Vagina (tissue), 2 donors: ENCODE measurements at regions of chr12 and their contacts with region 1.

Region 1: GRCh38 chr12:47247433-47247832 is 167.7 kb upstream of the AMIGO2 start:
- DNase-seq: no peak
- H3K4me3 ChIP-seq: no peak overlapping the region
- H3K27ac ChIP-seq: no peak overlapping the region
- H3K4me1 ChIP-seq: peaks cover 5% of the 10 kb centered on the region
- H3K27me3 ChIP-seq: no peaks in the 10 kb centered on the region
- CTCF ChIP-seq: no peak
- POLR2A ChIP-seq: no peak

Region 2: DNA sequence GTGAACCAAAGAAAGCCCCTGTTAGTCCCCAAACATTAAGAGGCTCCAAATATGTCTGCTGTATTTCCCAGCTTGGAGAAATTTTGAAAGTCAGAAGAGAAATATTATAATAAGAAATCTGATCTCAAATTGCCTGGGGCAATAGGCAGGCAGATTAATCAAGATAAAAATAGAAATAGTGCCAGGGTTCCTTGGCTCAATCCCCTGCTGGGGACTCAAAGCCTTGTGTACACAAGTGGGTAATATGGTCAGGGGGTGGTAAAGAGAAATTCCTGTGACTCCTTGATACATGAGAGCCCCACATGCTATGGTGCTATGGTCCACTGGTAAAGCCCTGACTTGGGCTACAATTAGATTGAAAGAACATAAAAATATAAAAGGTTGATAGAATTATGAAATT is 1559.2 kb before region 1 on chr12:
- intact Hi-C with region 1: loop called (anchors 5 kb)
- DNase-seq: no peak
- H3K4me3 ChIP-seq: no peak overlapping the region
- H3K27ac ChIP-seq: no peak overlapping the region
- H3K4me1 ChIP-seq: no peaks in the 10 kb centered on the region
- H3K27me3 ChIP-seq: no peaks in the 10 kb centered on the region
- CTCF ChIP-seq: no peak
- POLR2A ChIP-seq: no peak